Heart right ventricle (tissue), 16 donors: ENCODE measurements at regions of chr22 and their contacts with region 1.

Region 1: GRCh38 chr22:24310969-24311368 is 40.3 kb downstream of the SPECC1L start:
- DNase-seq: no peak
- ATAC-seq: no peak
- H3K4me3 ChIP-seq: no peak overlapping the region
- H3K27ac ChIP-seq: no peak overlapping the region
- H3K4me1 ChIP-seq: peaks cover 0 to 37% (median 25%) of the 10 kb centered on the region in 9 donors
- H3K27me3 ChIP-seq: no peaks in the 10 kb centered on the region
- CTCF ChIP-seq: no peak

Region 2: DNA sequence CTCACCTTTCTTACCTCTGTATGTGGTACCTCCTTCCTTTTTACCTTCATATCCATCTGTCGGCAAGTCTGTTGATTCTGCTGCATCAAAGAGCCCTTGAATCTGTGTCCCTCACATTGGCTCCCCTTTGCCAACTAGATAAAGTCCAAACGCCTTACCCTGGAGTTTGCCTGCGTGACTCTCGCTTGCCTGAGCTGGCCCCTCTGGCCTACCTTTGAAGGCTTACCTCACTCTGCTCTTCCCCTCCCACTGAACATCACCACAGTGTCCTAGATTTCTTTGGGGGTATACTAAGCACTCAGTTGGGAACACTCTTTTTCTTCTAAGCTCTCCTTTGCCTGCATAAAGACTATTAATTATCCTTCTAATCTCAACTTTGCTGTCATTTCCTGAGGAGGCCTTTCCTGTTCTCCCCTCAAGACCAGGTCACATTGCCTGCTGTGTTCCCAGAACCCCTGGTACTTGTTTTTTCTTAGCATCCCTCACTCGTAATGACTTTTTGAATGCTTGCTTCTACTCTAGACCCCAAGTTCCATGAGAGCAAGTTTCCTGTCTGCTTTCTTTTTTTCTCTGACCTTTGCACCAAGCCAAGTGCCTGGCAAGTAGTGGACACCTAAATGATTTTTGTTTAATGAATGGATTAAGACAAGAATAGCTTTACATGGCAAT is 48.6 kb after region 1 on chr22:
- intact Hi-C with region 1: loop called in 1 of 10 experiments (anchors 5 kb)
- DNase-seq: no peak
- ATAC-seq: peak in 6 of 8 donors; percentile 12 to 59 (median 30)
- H3K4me3 ChIP-seq: no peak overlapping the region
- H3K27ac ChIP-seq: peak overlapping the region in 5 of 10 donors; percentile 10 to 46 (median 35)
- H3K4me1 ChIP-seq: peaks cover 8 to 23% (median 20%) of the 10 kb centered on the region in 9 donors
- H3K27me3 ChIP-seq: no peaks in the 10 kb centered on the region
- CTCF ChIP-seq: no peak